Right ventricle myocardium inferior (tissue), 1 donor: ENCODE measurements at regions of chr5 and their contacts with region 1.

Region 1: DNA sequence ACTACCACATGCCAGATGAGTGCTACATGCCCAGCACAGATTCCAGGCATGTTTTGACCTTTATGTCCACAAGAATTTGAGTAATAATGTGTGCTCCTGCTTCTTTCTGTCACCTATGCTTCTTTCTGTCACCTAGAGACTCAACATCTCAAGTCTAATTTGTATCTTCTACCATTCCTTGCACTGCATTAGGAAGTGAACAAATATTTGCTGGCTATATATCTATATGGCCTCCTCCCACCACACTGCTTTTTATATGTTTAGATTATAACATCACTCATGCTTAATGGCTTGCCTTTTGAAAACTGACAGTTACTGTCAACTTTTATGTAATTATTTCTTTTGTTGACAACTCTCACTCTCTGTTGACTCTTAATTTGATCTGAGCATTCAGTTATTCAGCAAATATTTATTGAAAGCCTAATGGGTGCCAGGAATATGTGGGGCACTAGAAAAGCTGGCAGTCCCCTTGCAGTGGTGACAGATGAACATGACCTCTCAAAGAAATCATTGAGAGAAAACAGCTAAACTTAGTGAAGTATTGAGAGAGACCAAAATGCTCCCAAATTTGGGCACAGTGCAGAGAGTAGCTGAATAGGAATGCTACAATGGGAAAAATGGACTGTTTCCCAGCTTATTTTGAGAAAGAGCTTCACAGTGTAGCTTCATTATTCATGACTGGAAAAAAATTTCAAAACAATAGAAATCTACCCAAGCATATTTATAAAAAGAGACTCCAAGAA is 257.7 kb downstream of the SGCD start:
- DNase-seq: no peak
- ATAC-seq: peak; percentile 56

Region 2: GRCh38 chr5:155728146-155728856 is 856.4 kb before region 1 on chr5:
- intact Hi-C with region 1: loop called (anchors 10 kb)
- DNase-seq: peak; percentile 78
- ATAC-seq: peak; percentile 69

Region 3: GRCh38 chr5:155954701-155955445 is 629.8 kb before region 1 on chr5:
- intact Hi-C with region 1: loop called (anchors 10 kb)
- DNase-seq: no peak
- ATAC-seq: no peak

Region 4: GRCh38 chr5:156475182-156476157 is 109.2 kb before region 1 on chr5:
- intact Hi-C with region 1: loop called (anchors 5 kb)
- DNase-seq: no peak
- ATAC-seq: peak; percentile 87

Region 5: DNA sequence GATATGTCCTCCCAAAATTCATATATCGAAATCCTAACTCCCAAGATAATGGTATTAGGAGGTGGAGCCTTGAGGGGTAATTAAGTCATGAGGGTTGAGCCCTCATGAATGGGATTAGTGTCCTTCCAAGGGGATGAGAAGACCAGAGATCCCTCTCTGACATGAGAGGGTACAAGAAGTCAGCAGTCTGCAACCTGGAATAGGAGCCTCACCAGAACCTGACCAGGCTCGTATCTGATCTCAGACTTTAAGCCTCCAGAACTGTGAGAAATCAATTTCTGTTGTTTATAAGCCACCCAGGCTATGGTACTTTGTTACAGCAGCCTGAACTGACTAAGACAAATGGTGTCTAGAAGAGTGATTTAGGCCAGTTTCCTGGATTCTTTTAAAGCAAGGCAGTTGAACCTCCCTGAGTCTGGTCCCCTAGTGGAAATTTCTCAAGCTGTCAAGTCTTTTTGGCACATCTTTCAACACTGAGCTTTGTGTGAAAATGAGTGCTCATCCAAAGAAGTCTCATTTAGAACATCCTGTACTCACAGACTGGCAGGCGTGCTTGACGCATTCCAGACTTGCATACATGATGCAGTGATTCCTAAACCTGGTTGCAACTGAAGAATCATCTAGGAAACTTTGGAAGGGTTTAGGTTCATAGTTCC is 10.6 kb after region 1 on chr5:
- intact Hi-C with region 1: loop called (anchors 1 kb)
- DNase-seq: peak; percentile 81
- ATAC-seq: peak; percentile 94

Region 6: DNA sequence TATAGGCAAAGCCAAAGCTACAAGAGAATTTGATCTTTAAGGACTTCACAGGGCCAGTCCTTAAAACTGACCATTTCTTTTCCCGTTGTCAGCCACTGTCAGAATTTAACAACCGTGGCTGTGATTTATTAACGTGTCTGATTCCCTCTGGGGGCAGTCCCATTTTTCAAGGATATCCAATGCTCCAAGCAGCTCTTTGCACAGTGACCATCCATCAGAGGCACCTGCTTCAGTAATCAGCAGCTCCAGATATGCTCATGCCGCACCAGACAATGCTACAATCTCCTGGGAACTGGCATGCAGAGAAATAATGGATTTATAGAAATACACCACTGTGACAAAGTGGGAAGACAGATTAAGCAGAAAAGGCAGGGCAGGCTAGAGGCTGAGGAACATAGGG is 102.1 kb after region 1 on chr5:
- intact Hi-C with region 1: loop called (anchors 1 kb)
- DNase-seq: no peak
- ATAC-seq: peak; percentile 68